A673 (cell line): ENCODE measurements at regions of chr18 and their contacts with region 1.

Region 1: DNA sequence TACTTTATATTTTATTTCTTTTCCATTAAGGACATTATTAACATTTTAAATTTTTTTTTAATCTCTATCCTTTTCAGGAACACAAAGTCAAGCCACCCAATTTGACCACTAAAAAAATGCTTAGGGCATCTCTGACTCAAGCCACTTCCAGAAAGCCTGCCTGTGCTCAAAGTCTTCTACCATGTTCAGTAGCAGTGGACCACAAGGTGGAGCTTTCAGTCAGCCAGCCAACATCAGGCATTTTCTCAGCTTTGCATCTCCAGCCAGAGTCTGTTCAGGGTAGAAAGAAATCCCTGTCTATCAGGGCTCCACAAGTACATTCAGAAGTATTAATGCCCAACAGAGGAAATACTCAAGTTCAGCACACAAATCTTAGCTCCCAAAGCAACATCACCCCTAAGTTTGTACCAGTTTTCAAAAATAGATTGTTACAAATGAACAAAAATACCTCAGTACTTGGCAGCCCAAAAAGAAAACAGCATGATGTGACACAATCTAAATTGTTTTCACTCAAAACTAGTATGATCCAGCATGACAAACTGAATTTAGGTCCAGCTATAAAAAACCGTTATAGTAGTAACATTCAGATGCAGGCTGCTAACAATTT is 37.6 kb downstream of the C18orf63 start:
- DNase-seq: peak; percentile 55
- H3K4me3 ChIP-seq: no peak overlapping the region
- H3K27ac ChIP-seq: no peak overlapping the region
- H3K4me1 ChIP-seq: no peaks in the 10 kb centered on the region
- H3K27me3 ChIP-seq: peaks cover 9% of the 10 kb centered on the region
- CTCF ChIP-seq: peak; percentile 68

Region 2: GRCh38 chr18:74476140-74476539 is 122.9 kb after region 1 on chr18:
- CTCF ChIA-PET with region 1: no interaction called
- POLR2A ChIA-PET with region 1: no interaction called
- intact Hi-C with region 1: loop called (anchors 1 kb)
- DNase-seq: peak; percentile 62
- H3K4me3 ChIP-seq: no peak overlapping the region
- H3K27ac ChIP-seq: no peak overlapping the region
- H3K4me1 ChIP-seq: no peaks in the 10 kb centered on the region
- H3K27me3 ChIP-seq: peaks cover 16% of the 10 kb centered on the region
- CTCF ChIP-seq: peak; percentile 82

Region 3: DNA sequence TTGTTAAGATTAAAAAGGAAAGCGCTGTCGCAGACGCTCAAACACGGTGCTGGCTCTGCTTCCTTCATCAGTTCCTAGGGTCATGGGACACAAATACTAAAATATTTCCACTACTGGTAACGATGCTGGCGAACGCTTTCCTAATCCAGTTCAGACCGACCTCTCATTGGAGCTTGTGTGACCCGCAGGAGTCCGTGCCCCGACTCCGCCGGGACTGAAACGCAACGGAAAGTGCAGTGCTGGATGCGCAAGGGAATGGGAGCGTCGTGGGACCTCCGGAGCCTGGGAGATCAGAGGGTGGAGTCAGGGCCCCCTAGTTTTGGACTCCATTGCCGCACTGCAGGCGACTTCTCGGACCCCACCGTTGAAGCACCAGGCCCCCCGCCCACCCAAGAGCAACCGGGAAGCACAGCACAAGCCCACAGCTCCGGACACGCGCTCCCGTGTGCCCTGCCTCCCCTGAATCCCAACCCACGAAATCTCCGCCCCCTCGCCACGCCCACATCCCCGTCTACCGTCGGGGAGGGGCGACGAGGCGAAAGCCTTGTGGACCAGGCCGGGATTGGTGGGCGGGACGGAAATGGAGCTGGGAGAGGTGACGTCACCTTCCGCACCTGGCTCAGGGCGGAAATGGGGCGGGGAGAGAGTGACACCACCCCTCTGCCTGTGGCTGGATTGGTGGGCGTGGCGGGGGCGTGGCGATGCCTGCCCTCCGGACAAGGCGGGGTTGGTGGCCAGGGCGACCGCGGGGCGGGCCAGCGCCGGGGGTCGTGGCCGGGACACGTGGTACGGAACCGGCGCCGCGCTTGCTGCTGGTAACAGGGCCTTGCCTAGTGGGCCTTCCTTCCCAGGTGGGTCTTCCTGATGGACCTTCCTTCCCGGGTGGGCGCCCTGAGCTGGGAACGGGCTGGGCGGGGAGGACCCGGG is 142.6 kb after region 1 on chr18 and contains the start of gene CNDP2:
- CTCF ChIA-PET with region 1: interaction called, 12 read pairs
- POLR2A ChIA-PET with region 1: no interaction called
- intact Hi-C with region 1: loop called (anchors 1 kb)
- DNase-seq: peak; percentile 98
- H3K4me3 ChIP-seq: peak within 1 kb of the TSS; percentile 94
- H3K27ac ChIP-seq: peak within 1 kb of the TSS; percentile 88
- H3K4me1 ChIP-seq: peaks cover 8% of the 10 kb centered on the region
- H3K27me3 ChIP-seq: no peaks in the 10 kb centered on the region
- CTCF ChIP-seq: no peak
- total RNA-seq, gene CNDP2: 75.3 and 89.4 TPM in 2 replicates

Region 4: GRCh38 chr18:74551936-74552555 is 198.8 kb after region 1 on chr18:
- CTCF ChIA-PET with region 1: interaction called, 14 read pairs
- POLR2A ChIA-PET with region 1: no interaction called
- intact Hi-C with region 1: loop called (anchors 1 kb)
- DNase-seq: peak; percentile 82
- H3K4me3 ChIP-seq: no peak overlapping the region
- H3K27ac ChIP-seq: no peak overlapping the region
- H3K4me1 ChIP-seq: no peaks in the 10 kb centered on the region
- H3K27me3 ChIP-seq: peaks cover 21% of the 10 kb centered on the region
- CTCF ChIP-seq: peak; percentile 83